ENCODE measurements at regions of chr12 and their contacts with region 1.

Region 1: DNA sequence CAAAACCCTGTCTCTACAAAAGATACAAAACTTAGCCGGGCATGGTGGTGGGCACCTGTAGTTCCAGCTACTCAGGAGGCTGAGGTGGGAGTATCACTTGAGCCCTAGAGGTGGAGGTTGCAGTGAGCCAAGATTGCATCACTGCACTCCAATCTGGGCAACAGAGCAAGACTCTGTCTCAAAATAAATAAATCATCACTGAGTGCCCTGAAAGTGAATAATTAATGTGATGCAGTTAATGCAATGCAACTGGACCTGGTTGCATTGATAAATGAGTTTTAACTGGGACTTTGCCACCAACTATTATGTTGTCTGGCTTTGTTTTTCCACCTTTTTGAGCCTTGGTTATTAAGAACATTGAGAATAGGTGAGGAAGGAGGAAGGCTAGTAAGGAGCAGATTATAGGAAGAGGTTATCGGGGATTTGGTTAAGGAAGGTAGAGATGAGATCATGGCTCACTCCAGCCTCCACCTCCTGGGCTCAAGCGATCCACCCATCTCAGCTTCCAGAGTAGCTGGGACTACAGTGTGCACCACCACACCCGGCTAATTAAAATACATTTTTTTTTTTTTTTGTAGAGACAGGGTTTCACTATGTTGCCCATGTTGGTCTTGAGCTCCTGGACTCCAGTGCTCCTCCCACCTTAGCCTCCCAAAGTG is 8.0 kb downstream of the BORCS5 start:
- DNase-seq: no peak
- H3K4me3 ChIP-seq: no peak overlapping the region
- H3K4me1 ChIP-seq: peaks cover 20% of the 10 kb centered on the region
- H3K27me3 ChIP-seq: no peaks in the 10 kb centered on the region

Region 2: DNA sequence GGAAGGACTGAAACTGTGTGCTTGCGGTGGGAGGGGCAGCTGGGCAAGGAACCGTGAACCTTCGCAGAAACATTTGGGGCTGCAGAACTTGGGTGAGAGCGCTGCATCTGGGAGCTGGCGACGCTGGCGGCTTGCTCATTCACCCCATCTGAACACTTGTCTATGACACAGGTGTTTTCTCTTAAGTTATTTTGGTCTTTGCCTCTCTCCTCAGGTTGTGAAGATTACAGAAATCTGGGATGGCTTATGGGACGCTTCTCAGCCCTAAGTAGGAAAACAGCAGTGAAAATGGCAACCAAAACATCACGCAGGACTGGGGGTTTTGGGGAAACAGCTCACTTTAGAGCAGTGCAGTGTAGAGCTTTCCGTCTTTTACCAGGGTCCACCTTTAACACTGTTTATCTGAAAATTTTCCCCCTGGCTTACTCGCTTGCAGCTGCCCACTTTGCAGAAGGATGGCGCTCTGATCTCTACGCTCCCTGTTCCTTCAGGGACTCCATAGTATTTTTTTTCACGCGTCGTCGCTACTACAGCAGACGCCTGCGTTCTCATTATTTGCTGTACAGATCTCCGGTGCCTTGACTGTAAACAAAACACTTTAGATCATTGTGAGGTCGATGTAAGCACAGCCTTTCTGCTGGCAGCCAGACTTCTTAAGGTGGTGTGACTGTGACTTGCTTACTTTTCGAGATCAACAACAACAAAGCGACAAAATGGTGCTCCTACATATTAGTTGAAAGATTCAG is 349.5 kb after region 1 on chr12:
- in situ Hi-C with region 1: loop called (anchors 5 kb)
- DNase-seq: peak; percentile 38 to 58
- H3K4me3 ChIP-seq: peak overlapping the region; percentile 6
- H3K4me1 ChIP-seq: peaks cover 29% of the 10 kb centered on the region
- H3K27me3 ChIP-seq: no peaks in the 10 kb centered on the region

Measured in HAP-1 (cell line).